Dorsolateral prefrontal cortex (tissue), 120 donors: ENCODE measurements at regions of chr2 and their contacts with region 1.

Region 1: GRCh38 chr2:48946449-48947048 is 191.0 kb upstream of the LHCGR start:
- DNase-seq: peak in 3 of 10 donors; percentile 17 to 67 (median 53)
- H3K4me3 ChIP-seq: no peak overlapping the region
- H3K27ac ChIP-seq: no peak overlapping the region
- H3K27me3 ChIP-seq: no peaks in the 10 kb centered on the region
- CTCF ChIP-seq: peak; percentile 81 to 99 (median 93)

Region 2: DNA sequence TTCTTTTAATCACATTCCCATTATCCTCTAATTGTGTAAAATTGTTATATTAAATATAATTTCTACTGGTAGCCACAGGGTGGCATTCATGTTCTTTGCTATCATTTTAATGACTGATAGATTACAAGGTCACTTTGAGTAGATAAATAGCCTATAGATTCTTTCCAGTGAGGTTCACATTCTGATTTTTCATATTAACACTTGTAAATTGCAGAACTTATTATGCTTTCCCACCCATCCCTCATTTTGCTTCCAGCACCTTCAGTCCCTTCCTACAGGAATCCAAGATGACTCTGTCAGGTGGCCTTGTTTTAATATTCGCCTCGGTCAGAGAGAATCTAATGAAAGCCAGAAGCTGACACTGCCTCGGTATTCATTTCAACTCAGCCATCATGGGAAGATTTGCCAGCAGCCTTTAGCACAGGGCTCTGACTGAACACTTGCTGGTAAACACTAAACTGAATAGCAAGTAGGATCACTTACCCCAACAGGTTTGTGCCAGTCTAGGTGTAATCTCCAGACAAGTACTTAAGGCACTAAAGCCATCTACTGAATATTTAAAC is 308.9 kb after region 1 on chr2:
- intact Hi-C with region 1: loop called in 1 of 2 experiments (anchors 10 kb)
- DNase-seq: peak in 1 of 10 donors; percentile 37
- H3K4me3 ChIP-seq: no peak overlapping the region
- H3K27ac ChIP-seq: peak overlapping the region in 11 of 59 donors; percentile 5 to 64 (median 44)
- H3K27me3 ChIP-seq: no peaks in the 10 kb centered on the region
- CTCF ChIP-seq: peak in 55 of 56 donors; percentile 18 to 78 (median 54)

Region 3: DNA sequence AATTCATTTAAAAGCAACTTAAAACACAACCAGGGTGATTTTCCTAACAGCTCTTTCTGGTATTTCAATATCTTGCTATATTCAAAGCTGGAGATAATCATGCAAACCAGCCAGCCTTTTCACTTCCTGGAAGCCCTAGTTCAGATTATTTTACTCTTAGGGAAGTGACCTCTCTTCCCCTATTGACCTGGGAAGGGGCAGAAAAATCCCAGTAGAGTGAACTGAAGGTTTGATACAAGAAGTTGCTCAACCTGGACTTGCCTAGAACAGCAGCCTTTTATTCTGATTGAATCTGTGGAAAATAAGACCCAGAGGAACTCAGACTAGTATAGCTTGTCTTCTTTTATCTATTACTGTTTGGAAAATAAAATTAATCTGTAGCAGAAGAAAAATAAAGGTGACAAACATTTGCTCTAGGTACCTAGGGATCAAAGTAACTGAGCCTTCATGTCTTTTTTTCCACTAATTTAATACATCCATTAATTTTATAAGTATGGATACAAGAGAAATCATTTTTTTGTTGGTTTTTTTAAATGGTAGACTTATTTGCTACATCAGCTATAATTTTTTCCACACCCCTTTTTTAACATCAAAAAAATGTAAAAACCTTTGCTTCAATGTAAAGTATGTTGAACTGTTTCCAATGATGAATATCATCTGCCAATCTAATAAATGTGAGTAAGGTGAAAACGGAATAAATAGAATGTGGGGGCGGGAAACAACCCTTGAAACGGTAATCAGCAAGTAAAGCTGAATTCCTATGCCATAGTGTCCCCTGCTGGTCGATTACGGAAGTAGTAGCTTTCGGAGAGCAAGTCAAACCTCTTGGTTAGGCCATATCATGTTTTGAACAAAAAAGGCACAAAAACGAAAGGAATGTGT is 1455.5 kb after region 1 on chr2:
- intact Hi-C with region 1: loop called in 1 of 2 experiments (anchors 10 kb)
- DNase-seq: peak in 7 of 10 donors; percentile 35 to 76 (median 51)
- H3K4me3 ChIP-seq: no peak overlapping the region
- H3K27ac ChIP-seq: no peak overlapping the region
- H3K27me3 ChIP-seq: no peaks in the 10 kb centered on the region
- CTCF ChIP-seq: peak; percentile 59 to 96 (median 83)

Region 4: DNA sequence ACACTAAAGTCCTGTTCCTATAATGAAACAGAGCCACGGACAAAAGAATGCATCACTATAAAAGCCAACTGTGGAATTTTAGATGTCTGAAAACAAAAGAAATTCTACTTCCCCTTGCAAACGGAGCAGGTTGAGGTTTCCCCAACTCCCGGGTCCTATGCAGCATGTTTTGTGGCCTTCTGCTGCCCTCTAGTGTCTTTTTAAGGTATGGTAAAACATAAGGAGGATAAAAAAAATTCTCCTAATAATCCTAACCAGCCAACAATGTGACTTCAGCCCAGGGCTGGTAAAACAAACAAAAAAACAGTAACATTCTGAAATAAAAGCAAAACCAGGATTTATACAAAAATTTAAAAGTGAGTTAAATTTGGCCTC is 1545.9 kb after region 1 on chr2:
- intact Hi-C with region 1: loop called in 1 of 2 experiments (anchors 10 kb)
- DNase-seq: peak in 3 of 10 donors; percentile 9 to 58 (median 25)
- H3K4me3 ChIP-seq: peak overlapping the region in 47 of 59 donors; percentile 8 to 60 (median 38)
- H3K27ac ChIP-seq: peak overlapping the region in 43 of 59 donors; percentile 6 to 80 (median 53)
- H3K27me3 ChIP-seq: no peaks in the 10 kb centered on the region
- CTCF ChIP-seq: peak; percentile 59 to 90 (median 78)